ENCODE measurements at regions of chr19 and their contacts with region 1.

Region 1: GRCh38 chr19:57934820-57935665 is at the start of gene ZNF418:
- DNase-seq: peak; percentile 81
- ATAC-seq: peak; percentile 99
- H3K4me3 ChIP-seq: peak within 1 kb of the TSS; percentile 27 to 83 (median 77)
- H3K4me3 Mint-ChIP-seq: peak within 1 kb of the TSS; percentile 94
- H3K27ac ChIP-seq: peak within 1 kb of the TSS; percentile 74 to 87
- H3K27ac Mint-ChIP-seq: peak within 1 kb of the TSS; percentile 92
- H3K4me1 ChIP-seq: peaks cover 8 to 14% of the 10 kb centered on the region in 2 donors
- H3K4me1 Mint-ChIP-seq: peaks cover 17% of the 10 kb centered on the region
- H3K27me3 ChIP-seq: no peaks in the 10 kb centered on the region
- H3K27me3 Mint-ChIP-seq: no peaks in the 10 kb centered on the region
- CTCF ChIP-seq: no peak
- total RNA-seq, gene ZNF418: 35.8 and 38.9 TPM in 2 replicates

Region 2: DNA sequence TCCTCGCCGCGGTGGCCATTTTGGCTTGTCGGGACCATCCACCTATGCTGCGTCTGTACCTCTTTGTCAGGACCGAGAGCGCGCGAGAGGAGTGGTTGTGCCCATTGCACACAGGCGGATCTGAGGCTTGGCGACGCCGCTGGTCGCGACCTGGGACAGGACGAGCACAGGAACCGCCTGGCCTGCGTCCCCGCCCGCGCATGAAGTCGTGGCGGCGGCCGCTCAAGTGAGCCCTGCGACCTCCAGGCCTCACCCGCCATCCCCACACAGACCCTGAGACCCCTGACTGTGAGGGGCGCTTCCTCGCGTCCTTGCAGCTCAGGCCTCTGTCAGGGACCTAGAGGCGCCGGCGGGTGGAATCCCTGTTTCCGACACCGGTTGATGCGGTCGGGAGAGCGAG is 148.8 kb before region 1 on chr19:
- CTCF ChIA-PET with region 1: no interaction called
- POLR2A ChIA-PET with region 1: no interaction called
- intact Hi-C with region 1: no loop called
- DNase-seq: no peak
- ATAC-seq: no peak
- H3K4me3 ChIP-seq: no peak overlapping the region
- H3K4me3 Mint-ChIP-seq: no peak overlapping the region
- H3K27ac ChIP-seq: no peak overlapping the region
- H3K27ac Mint-ChIP-seq: no peak overlapping the region
- H3K4me1 ChIP-seq: no peaks in the 10 kb centered on the region
- H3K4me1 Mint-ChIP-seq: peaks cover 9% of the 10 kb centered on the region
- H3K27me3 ChIP-seq: no peaks in the 10 kb centered on the region
- H3K27me3 Mint-ChIP-seq: no peaks in the 10 kb centered on the region
- CTCF ChIP-seq: no peak

Region 3: DNA sequence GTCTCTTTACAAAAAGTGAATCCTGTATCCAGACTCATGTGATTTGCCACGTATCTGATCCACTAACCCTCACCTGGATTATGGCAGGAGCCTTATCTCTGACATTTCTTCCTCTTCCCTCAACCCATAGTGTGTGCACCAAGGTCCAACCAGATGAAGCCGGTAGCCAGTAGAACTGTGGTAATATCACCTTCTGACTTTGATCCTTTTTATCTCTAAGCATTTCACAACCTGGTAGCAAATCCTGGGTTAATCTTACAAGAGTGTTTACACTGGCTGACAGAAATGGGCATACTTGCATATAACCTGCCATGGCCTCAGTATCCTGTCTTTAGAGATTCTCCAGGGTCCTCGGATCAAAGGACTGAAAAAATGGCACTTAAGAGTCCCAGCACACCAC is 20.5 kb before region 1 on chr19:
- CTCF ChIA-PET with region 1: interaction called, 4 read pairs
- POLR2A ChIA-PET with region 1: no interaction called
- intact Hi-C with region 1: loop called (anchors 1 kb)
- DNase-seq: no peak
- ATAC-seq: no peak
- H3K4me3 ChIP-seq: no peak overlapping the region
- H3K4me3 Mint-ChIP-seq: peak overlapping the region; percentile 96
- H3K27ac ChIP-seq: no peak overlapping the region
- H3K27ac Mint-ChIP-seq: peak overlapping the region; percentile 26
- H3K4me1 ChIP-seq: peaks cover 9 to 13% of the 10 kb centered on the region in 2 donors
- H3K4me1 Mint-ChIP-seq: peaks cover 40% of the 10 kb centered on the region
- H3K27me3 ChIP-seq: no peaks in the 10 kb centered on the region
- H3K27me3 Mint-ChIP-seq: no peaks in the 10 kb centered on the region
- CTCF ChIP-seq: no peak

Region 4: DNA sequence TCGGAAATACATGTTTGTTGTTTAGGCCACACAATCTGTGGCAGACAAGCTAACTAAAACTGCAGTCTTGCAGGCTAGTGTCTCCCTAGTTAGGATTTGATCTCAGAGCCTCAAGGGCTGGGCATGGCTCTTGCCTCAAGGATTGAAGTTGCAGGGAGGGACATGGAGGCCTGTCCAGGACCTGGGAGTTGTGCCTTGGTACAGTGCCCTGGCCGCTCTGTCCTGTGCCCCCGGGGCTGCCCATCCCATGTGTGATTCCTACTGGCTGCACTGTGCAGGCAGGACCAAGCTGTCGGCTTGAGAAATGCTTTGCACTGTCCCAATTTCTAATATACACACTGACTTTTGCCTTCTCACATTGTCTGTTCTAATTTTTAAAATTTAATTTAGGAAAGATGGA is 20.0 kb after region 1 on chr19:
- CTCF ChIA-PET with region 1: no interaction called
- POLR2A ChIA-PET with region 1: no interaction called
- intact Hi-C with region 1: no loop called
- DNase-seq: no peak
- ATAC-seq: no peak
- H3K4me3 ChIP-seq: no peak overlapping the region
- H3K4me3 Mint-ChIP-seq: no peak overlapping the region
- H3K27ac ChIP-seq: no peak overlapping the region
- H3K27ac Mint-ChIP-seq: no peak overlapping the region
- H3K4me1 ChIP-seq: no peaks in the 10 kb centered on the region
- H3K4me1 Mint-ChIP-seq: no peaks in the 10 kb centered on the region
- H3K27me3 ChIP-seq: peaks cover 0 to 5% (median 0%) of the 10 kb centered on the region in 4 experiments
- H3K27me3 Mint-ChIP-seq: peaks cover 9% of the 10 kb centered on the region
- CTCF ChIP-seq: no peak

Measured in B cell (primary cell).